GM12878 (cell line): ENCODE measurements at regions of chr9 and their contacts with region 1.

Region 1: DNA sequence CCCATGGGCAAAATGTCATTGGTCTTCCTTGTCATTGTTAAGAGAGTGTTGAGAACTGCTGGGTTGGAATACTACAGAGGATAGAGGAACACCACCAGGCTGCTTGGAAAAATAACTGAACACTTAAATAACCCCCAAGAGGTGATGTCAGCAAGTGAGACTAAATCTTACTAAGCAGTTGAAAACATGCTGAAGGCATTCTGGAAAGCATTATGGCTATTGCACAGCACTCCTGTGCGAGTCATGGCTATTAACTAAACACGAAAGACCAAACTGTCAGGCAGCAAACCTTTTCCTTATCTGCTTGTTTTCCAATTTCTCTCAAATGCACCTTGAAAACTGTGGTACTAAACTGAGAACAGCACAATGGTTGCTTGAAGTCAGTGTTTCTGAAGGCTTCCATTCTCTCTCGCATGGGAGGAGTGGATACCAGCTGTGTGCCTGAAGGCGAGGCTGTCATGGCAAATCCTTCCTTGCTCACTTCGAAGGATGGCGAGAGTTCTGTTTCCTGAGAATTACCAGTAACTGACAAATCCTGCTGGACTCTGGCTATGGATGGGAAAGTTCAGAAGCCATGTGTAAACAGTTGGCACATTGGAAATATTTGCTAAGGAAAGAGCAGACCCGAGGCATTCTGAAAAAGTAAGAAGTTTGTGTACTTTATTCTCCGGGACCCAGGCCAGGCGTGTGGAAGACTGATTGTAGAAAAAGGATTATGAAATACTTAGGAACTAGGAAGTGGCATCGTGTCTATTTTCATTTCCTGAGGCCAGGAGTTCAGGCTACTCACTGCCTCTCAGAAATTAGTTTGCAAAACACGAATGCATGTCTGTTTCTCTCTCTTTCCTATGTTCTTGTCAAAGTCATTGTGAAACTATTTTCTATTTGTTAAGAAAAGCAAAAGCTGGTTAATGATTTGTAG is 182.1 kb downstream of the DMRT2 start:
- DNase-seq: no peak
- ATAC-seq: peak; percentile 86
- H3K4me3 ChIP-seq: no peak overlapping the region
- H3K27ac ChIP-seq: no peak overlapping the region
- H3K4me1 ChIP-seq: no peaks in the 10 kb centered on the region
- H3K27me3 ChIP-seq: no peaks in the 10 kb centered on the region
- CTCF ChIP-seq: no peak
- EP300 ChIP-seq: no peak
- POLR2A ChIP-seq: no peak
- RAD21 ChIP-seq: no peak

Region 2: GRCh38 chr9:1248743-1249142 is 16.5 kb after region 1 on chr9:
- CTCF ChIA-PET with region 1: interaction called, 3 read pairs
- POLR2A ChIA-PET with region 1: interaction called, 3 read pairs
- RAD21 ChIA-PET with region 1: no interaction called
- SMC1A ChIA-PET with region 1: interaction called, 14 read pairs
- in situ Hi-C with region 1: no loop called
- intact Hi-C with region 1: no loop called
- DNase-seq: no peak
- ATAC-seq: no peak
- H3K4me3 ChIP-seq: no peak overlapping the region
- H3K27ac ChIP-seq: no peak overlapping the region
- H3K4me1 ChIP-seq: no peaks in the 10 kb centered on the region
- H3K27me3 ChIP-seq: no peaks in the 10 kb centered on the region
- CTCF ChIP-seq: no peak
- EP300 ChIP-seq: no peak
- POLR2A ChIP-seq: no peak
- RAD21 ChIP-seq: no peak